Common myeloid progenitor, CD34-positive (primary cell): ENCODE measurements at regions of chr5 and their contacts with region 1.

Region 1: GRCh38 chr5:142888469-142889085 is 118.4 kb downstream of the ARHGAP26 start:
- DNase-seq: peak; percentile 36 to 53 (median 39)
- H3K4me3 ChIP-seq: no peak overlapping the region
- H3K27ac ChIP-seq: no peak overlapping the region
- H3K4me1 ChIP-seq: no peaks in the 10 kb centered on the region
- H3K27me3 ChIP-seq: no peaks in the 10 kb centered on the region

Region 2: GRCh38 chr5:142740474-142741242 is 147.9 kb before region 1 on chr5:
- CTCF ChIA-PET with region 1: interaction called, 115 read pairs
- POLR2A ChIA-PET with region 1: no interaction called
- DNase-seq: no peak
- H3K4me3 ChIP-seq: no peak overlapping the region
- H3K27ac ChIP-seq: no peak overlapping the region
- H3K4me1 ChIP-seq: peaks cover 2 to 36% (median 21%) of the 10 kb centered on the region in 4 experiments
- H3K27me3 ChIP-seq: no peaks in the 10 kb centered on the region

Region 3: GRCh38 chr5:142874537-142874936 is 14.0 kb before region 1 on chr5:
- CTCF ChIA-PET with region 1: interaction called, 86 read pairs
- POLR2A ChIA-PET with region 1: no interaction called
- DNase-seq: no peak
- H3K4me3 ChIP-seq: no peak overlapping the region
- H3K27ac ChIP-seq: no peak overlapping the region
- H3K4me1 ChIP-seq: peaks cover 0 to 16% (median 11%) of the 10 kb centered on the region in 4 experiments
- H3K27me3 ChIP-seq: no peaks in the 10 kb centered on the region